ENCODE measurements at regions of chr19 and their contacts with region 1.

Region 1: GRCh38 chr19:40603389-40604135 is 2.4 kb downstream of the LTBP4 start:
- DNase-seq: peak; percentile 99 to 100
- ATAC-seq: peak; percentile 41 to 80
- H3K4me3 ChIP-seq: peak overlapping the region; percentile 36
- H3K27ac ChIP-seq: peak overlapping the region; percentile 55 to 85
- H3K4me1 ChIP-seq: peaks cover 58% of the 10 kb centered on the region
- CTCF ChIP-seq: peak; percentile 20; the same call in 1 of the 3 replicates
- EP300 ChIP-seq: no peak
- POLR2A ChIP-seq: peak; percentile 20; the same call in 1 of the 2 replicates
- RAD21 ChIP-seq: no peak; a peak in 1 of 5 replicates

Region 2: DNA sequence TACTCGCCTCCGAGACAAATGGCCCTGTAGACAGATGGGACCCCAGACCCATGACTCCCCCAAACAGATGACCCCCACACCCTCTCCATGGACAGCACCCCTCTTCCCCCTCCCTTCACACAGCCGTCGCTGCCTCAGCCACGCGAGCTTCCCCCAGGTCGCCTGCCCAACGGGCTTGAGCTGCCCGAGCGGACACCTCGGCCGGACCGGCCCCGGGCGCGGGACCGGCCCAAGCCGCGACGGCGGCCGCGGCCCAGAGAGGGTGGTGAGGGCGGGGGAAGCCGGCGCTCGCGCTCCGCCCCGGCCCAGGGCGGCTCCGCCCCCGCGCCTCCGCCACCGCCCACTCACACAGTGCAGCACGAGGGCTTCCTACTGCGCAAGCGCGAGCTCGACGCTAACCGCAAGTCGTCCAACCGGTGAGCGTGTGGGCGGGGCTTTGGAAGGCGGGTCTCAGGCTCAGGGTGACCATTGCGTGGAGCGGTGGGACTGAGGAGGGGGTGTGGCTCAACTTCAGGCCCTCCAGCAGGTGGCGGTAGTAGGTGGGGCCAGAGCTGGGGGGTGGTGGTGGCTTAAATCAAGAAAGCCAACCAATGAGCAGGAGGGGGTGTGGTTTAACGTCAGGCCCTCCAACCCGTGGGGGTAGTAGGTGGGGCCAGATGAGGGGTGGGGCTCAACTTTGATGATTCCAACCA is 33.1 kb before region 1 on chr19:
- CTCF ChIA-PET with region 1: interaction called, 2,247 read pairs
- POLR2A ChIA-PET with region 1: interaction called, 28 read pairs
- DNase-seq: peak; percentile 100
- ATAC-seq: peak; percentile 80 to 91
- H3K4me3 ChIP-seq: peak overlapping the region; percentile 56
- H3K27ac ChIP-seq: peak overlapping the region; percentile 84 to 89
- H3K4me1 ChIP-seq: peaks cover 17% of the 10 kb centered on the region
- CTCF ChIP-seq: peak; percentile 59
- EP300 ChIP-seq: no peak
- POLR2A ChIP-seq: peak; percentile 78
- RAD21 ChIP-seq: peak; percentile 55 to 59

Region 3: DNA sequence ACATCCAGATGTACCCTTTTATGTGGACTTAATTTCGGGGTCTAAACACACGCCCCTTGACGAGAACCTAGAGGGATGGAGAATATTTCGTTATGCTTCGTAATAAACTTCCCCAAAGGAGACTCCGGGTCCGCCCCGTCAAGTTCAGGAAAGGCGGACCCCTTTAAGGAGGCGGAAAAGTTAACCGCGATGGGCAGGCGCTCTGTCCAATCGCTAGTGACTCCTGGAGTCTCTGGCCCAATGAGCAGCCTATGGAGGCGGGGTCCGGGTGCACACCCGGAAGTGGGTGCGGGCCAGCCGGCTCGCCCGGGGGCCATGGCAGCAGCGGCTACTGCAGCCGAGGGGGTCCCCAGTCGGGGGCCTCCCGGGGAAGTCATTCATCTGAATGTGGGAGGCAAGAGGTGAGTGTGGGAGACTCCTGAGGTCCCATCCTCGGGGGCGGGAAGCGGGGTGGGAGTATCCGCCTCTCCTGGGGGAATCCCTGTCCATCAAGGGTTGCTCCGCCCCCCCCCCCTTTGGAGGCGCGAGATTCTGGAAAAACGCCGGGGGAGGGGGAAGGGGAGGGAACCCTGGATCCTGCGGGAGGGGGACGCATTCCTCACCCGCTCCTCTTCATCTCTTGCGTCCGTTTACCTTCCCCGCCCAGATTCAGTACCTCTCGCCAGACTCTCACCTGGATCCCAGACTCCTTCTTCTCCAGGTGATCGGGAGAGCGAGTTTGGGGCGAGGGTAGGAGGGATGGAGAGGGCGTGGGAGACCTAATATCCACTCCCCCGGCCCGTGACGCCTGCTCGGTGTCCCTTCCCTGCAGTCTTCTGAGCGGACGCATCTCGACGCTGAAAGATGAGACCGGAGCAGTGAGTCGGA is 26.7 kb before region 1 on chr19 and contains the start of gene SHKBP1:
- CTCF ChIA-PET with region 1: interaction called, 2,247 read pairs
- POLR2A ChIA-PET with region 1: no interaction called
- DNase-seq: peak; percentile 99 to 100
- ATAC-seq: peak; percentile 94 to 99
- H3K4me3 ChIP-seq: peak within 1 kb of the TSS; percentile 65
- H3K27ac ChIP-seq: peak within 1 kb of the TSS; percentile 85 to 91
- H3K4me1 ChIP-seq: peaks cover 15% of the 10 kb centered on the region
- CTCF ChIP-seq: no peak
- EP300 ChIP-seq: no peak
- POLR2A ChIP-seq: peak; percentile 45
- RAD21 ChIP-seq: no peak
- polyA plus RNA-seq, gene SHKBP1: 75.2 and 79.7 TPM in 2 replicates

Region 4: GRCh38 chr19:40592170-40592569 is 11.4 kb before region 1 on chr19:
- CTCF ChIA-PET with region 1: interaction called, 385 read pairs
- POLR2A ChIA-PET with region 1: interaction called, 15 read pairs
- DNase-seq: peak; percentile 81 to 92
- ATAC-seq: peak in 1 of 2 experiments; percentile 58; a peak in 3 of 6 replicates
- H3K4me3 ChIP-seq: no peak overlapping the region
- H3K27ac ChIP-seq: no peak overlapping the region
- H3K4me1 ChIP-seq: peaks cover 36% of the 10 kb centered on the region
- CTCF ChIP-seq: no peak
- EP300 ChIP-seq: no peak
- POLR2A ChIP-seq: no peak
- RAD21 ChIP-seq: no peak

Region 5: GRCh38 chr19:40613640-40614303 is 10.2 kb after region 1 on chr19:
- CTCF ChIA-PET with region 1: interaction called, 17 read pairs
- POLR2A ChIA-PET with region 1: interaction called, 5 read pairs
- DNase-seq: peak; percentile 72 to 92
- ATAC-seq: peak; percentile 54 to 76
- H3K4me3 ChIP-seq: peak overlapping the region; percentile 44
- H3K27ac ChIP-seq: peak overlapping the region; percentile 60 to 74
- H3K4me1 ChIP-seq: peaks cover 16% of the 10 kb centered on the region; the same call in 2 of the 3 replicates
- CTCF ChIP-seq: no peak
- EP300 ChIP-seq: no peak
- POLR2A ChIP-seq: no peak
- RAD21 ChIP-seq: no peak

Region 6: GRCh38 chr19:40623403-40624251 is 20.1 kb after region 1 on chr19:
- CTCF ChIA-PET with region 1: interaction called, 33 read pairs
- POLR2A ChIA-PET with region 1: interaction called, 14 read pairs
- DNase-seq: peak; percentile 86 to 90
- ATAC-seq: peak; percentile 74 to 91
- H3K4me3 ChIP-seq: no peak overlapping the region
- H3K27ac ChIP-seq: no peak overlapping the region
- H3K4me1 ChIP-seq: peaks cover 6% of the 10 kb centered on the region; the same call in 2 of the 3 replicates
- CTCF ChIP-seq: no peak
- EP300 ChIP-seq: no peak
- POLR2A ChIP-seq: no peak
- RAD21 ChIP-seq: no peak

Region 7: DNA sequence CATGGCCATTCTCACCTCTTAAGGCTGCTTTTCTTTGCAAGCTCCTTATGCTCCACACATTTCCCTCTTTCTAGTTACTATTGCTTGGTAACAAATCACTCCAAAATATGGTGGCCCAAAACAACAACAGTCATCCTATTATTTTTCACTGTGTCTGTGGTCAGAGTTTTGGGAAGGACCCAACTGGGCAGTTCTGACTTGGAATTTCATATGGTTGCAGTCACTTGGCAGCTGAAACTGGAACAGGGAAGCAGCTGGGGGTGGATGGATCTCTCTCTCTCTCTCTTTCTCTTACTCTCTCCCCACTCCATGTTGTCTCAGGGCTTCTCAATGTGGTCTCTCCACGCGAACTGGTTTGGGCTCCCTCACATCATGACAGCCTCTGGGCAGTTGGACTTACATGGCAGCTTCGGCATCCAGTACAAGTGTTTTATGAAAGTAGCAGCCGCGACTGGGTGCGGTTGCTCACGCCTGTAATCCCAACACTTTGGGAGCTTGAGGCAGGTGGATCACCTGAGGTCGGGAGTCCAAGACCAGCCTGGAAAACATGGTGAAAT is 47.3 kb after region 1 on chr19:
- CTCF ChIA-PET with region 1: interaction called, 14 read pairs
- POLR2A ChIA-PET with region 1: interaction called, 7 read pairs
- DNase-seq: no peak
- ATAC-seq: no peak
- H3K4me3 ChIP-seq: no peak overlapping the region
- H3K27ac ChIP-seq: no peak overlapping the region
- H3K4me1 ChIP-seq: peaks cover 11% of the 10 kb centered on the region
- CTCF ChIP-seq: no peak
- EP300 ChIP-seq: no peak
- POLR2A ChIP-seq: no peak
- RAD21 ChIP-seq: no peak

Region 8: GRCh38 chr19:40741527-40742390 is 138.2 kb after region 1 on chr19:
- CTCF ChIA-PET with region 1: no interaction called
- POLR2A ChIA-PET with region 1: no interaction called
- DNase-seq: no peak
- ATAC-seq: peak in 1 of 2 experiments; percentile 4; a peak in 2 of 6 replicates
- H3K4me3 ChIP-seq: no peak overlapping the region
- H3K27ac ChIP-seq: no peak overlapping the region
- H3K4me1 ChIP-seq: peaks cover 13% of the 10 kb centered on the region
- CTCF ChIP-seq: no peak
- EP300 ChIP-seq: no peak
- POLR2A ChIP-seq: no peak
- RAD21 ChIP-seq: no peak